Endothelial cell of umbilical vein (primary cell): ENCODE measurements at regions of chr15 and their contacts with region 1.

Region 1: GRCh38 chr15:74036271-74037170 is 42.0 kb downstream of the PML start:
- DNase-seq: peak; percentile 59
- H3K4me3 ChIP-seq: no peak overlapping the region
- H3K27ac ChIP-seq: no peak overlapping the region
- H3K4me1 ChIP-seq: peaks cover 9% of the 10 kb centered on the region
- H3K27me3 ChIP-seq: no peaks in the 10 kb centered on the region
- CTCF ChIP-seq: peak; percentile 53 to 76
- POLR2A ChIP-seq: no peak

Region 2: GRCh38 chr15:73964736-73965093 is 71.8 kb before region 1 on chr15:
- CTCF ChIA-PET with region 1: interaction called, 651 read pairs
- POLR2A ChIA-PET with region 1: no interaction called
- dilution Hi-C with region 1: no loop called
- intact Hi-C with region 1: no loop called
- DNase-seq: peak; percentile 83
- H3K4me3 ChIP-seq: no peak overlapping the region
- H3K27ac ChIP-seq: no peak overlapping the region
- H3K4me1 ChIP-seq: peaks cover 20% of the 10 kb centered on the region
- H3K27me3 ChIP-seq: no peaks in the 10 kb centered on the region
- CTCF ChIP-seq: peak; percentile 95 to 98
- POLR2A ChIP-seq: no peak

Region 3: DNA sequence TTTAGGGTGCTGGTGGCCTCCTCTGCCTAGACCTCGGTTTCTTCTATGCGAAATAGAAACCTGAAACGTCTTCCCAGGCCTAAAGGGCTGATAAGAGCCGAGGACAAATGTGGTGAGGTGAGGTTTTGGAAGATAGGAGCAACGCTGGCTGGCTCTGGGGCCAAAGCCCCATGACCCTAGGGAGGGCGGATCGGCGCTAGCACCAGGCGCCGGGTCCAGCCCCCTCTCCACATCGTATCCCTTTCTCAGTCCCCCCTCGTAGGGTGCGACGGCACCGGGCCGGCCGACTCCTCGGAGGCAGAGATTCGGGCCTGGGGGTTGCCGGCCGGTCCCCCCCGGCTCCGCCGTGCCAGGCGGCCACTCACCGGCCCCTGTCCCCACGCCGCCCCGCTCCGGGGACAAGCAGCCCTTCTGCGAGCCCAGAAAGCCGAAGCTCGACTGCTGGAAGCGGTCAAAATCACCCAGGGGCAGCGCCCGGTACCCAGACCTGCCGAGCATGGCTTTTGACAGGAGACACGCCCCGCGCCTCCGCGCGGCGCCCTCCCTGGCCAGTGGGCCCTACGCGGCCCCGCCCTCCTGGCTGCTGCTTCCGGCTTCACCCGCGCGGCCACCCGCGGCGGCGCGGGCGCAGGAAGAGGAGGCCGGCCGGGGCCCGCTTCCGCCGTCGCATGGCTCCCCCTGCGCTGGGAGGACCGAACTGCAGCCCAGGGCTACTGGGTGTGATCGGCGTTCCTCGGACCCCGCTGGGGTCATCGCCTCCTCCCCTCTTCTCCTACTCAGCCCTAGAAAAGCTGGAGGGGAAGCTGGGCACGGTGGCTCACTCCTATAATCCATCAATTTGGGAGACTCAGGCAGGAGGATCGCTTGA is 44.6 kb before region 1 on chr15 and contains the start of gene STOML1:
- CTCF ChIA-PET with region 1: interaction called, 65 read pairs
- POLR2A ChIA-PET with region 1: interaction called, 3 read pairs
- dilution Hi-C with region 1: no loop called
- intact Hi-C with region 1: loop called (anchors 1 kb)
- DNase-seq: peak; percentile 90
- H3K4me3 ChIP-seq: peak within 1 kb of the TSS; percentile 51 to 67 (median 62)
- H3K27ac ChIP-seq: peak within 1 kb of the TSS; percentile 4
- H3K4me1 ChIP-seq: peaks cover 60% of the 10 kb centered on the region
- H3K27me3 ChIP-seq: no peaks in the 10 kb centered on the region
- CTCF ChIP-seq: peak; percentile 89 to 92
- POLR2A ChIP-seq: peak; percentile 67
- total RNA-seq, gene STOML1: 12.4 and 12.9 TPM in 2 replicates

Region 4: GRCh38 chr15:74019734-74020133 is 16.8 kb before region 1 on chr15:
- CTCF ChIA-PET with region 1: interaction called, 36 read pairs
- POLR2A ChIA-PET with region 1: no interaction called
- dilution Hi-C with region 1: no loop called
- intact Hi-C with region 1: no loop called
- DNase-seq: no peak
- H3K4me3 ChIP-seq: no peak overlapping the region
- H3K27ac ChIP-seq: no peak overlapping the region
- H3K4me1 ChIP-seq: peaks cover 6% of the 10 kb centered on the region
- H3K27me3 ChIP-seq: no peaks in the 10 kb centered on the region
- CTCF ChIP-seq: no peak
- POLR2A ChIP-seq: no peak

Region 5: DNA sequence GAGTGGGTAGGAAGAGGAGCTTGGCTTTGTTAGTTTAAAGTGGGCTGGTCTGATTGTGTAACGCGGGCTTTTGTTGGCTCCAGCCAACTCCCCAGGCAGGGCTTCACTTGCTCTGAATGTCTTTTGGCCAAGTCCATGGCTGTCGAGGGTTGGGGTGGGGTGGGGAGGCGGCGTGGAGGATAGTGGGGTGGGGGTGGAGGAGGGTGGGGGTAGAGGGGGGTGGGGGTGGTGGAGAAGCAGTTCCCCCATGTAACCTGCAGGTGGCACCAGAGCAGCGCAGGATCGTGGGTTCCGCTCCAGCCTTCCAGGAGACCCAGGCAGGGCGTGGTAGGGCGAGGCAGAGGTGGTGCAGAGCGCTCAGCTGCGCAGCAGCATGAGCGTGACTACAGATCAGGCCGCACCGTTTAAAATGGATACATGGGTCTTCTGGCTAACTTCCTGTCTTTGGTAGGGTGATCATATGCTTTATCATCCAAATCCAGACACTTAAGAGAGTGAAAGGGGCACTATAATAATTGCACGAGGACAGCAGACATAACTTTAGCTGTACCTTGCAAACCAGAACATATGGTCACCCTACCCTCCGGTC is 17.5 kb after region 1 on chr15:
- CTCF ChIA-PET with region 1: interaction called, 32 read pairs
- POLR2A ChIA-PET with region 1: no interaction called
- dilution Hi-C with region 1: no loop called
- intact Hi-C with region 1: no loop called
- DNase-seq: peak; percentile 41
- H3K4me3 ChIP-seq: no peak overlapping the region
- H3K27ac ChIP-seq: no peak overlapping the region
- H3K4me1 ChIP-seq: no peaks in the 10 kb centered on the region
- H3K27me3 ChIP-seq: peaks cover 3 to 12% of the 10 kb centered on the region in 2 experiments
- CTCF ChIP-seq: peak; percentile 19 to 77
- POLR2A ChIP-seq: no peak

Region 6: GRCh38 chr15:74291101-74292071 is 254.9 kb after region 1 on chr15:
- CTCF ChIA-PET with region 1: no interaction called
- POLR2A ChIA-PET with region 1: no interaction called
- dilution Hi-C with region 1: no loop called
- intact Hi-C with region 1: no loop called
- DNase-seq: peak; percentile 60
- H3K4me3 ChIP-seq: no peak overlapping the region
- H3K27ac ChIP-seq: no peak overlapping the region
- H3K4me1 ChIP-seq: peaks cover 4% of the 10 kb centered on the region
- H3K27me3 ChIP-seq: no peaks in the 10 kb centered on the region
- CTCF ChIP-seq: no peak
- POLR2A ChIP-seq: no peak